ENCODE measurements at regions of chr1 and their contacts with region 1.

Region 1: DNA sequence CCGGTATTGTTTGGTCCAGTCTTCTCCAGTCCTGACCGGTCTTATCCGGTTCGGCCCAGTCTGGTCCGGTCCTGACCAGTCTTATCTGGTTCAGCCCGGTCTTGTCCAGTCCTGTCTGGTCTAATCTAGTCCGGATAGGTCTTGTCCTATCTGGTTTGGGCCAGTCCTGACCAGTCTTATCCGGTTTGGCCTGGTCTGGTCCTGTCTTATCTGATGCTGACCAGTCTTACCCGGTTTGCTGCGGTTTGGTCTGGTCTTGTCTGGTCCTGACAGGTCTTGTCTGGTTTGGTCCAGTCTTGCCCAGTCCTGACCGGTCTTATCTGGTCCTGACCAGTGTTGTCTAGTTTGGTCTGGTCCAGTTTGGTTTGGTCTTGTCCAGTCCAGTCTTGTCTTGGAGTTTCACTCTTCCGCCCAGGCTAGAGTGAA is 30.1 kb downstream of the DHX9 start:
- DNase-seq: no peak
- ATAC-seq: peak; percentile 57
- H3K4me3 ChIP-seq: no peak overlapping the region
- H3K27ac ChIP-seq: no peak overlapping the region
- H3K4me1 ChIP-seq: no peaks in the 10 kb centered on the region
- H3K27me3 ChIP-seq: no peaks in the 10 kb centered on the region
- CTCF ChIP-seq: no peak
- EP300 ChIP-seq: no peak
- POLR2A ChIP-seq: no peak
- RAD21 ChIP-seq: no peak

Region 2: GRCh38 chr1:182889997-182890396 is 20.7 kb after region 1 on chr1:
- CTCF ChIA-PET with region 1: no interaction called
- POLR2A ChIA-PET with region 1: no interaction called
- in situ Hi-C with region 1: no loop called
- intact Hi-C with region 1: no loop called
- DNase-seq: no peak
- ATAC-seq: peak; percentile 25
- H3K4me3 ChIP-seq: no peak overlapping the region
- H3K27ac ChIP-seq: no peak overlapping the region
- H3K4me1 ChIP-seq: no peaks in the 10 kb centered on the region
- H3K27me3 ChIP-seq: no peaks in the 10 kb centered on the region
- CTCF ChIP-seq: no peak
- EP300 ChIP-seq: no peak
- POLR2A ChIP-seq: no peak
- RAD21 ChIP-seq: no peak

Region 3: GRCh38 chr1:183139281-183139942 is 270.2 kb after region 1 on chr1:
- CTCF ChIA-PET with region 1: no interaction called
- POLR2A ChIA-PET with region 1: no interaction called
- in situ Hi-C with region 1: loop called (anchors 25 kb)
- intact Hi-C with region 1: no loop called
- DNase-seq: peak; percentile 74
- ATAC-seq: peak; percentile 81
- H3K4me3 ChIP-seq: no peak overlapping the region
- H3K27ac ChIP-seq: peak overlapping the region; percentile 35
- H3K4me1 ChIP-seq: peaks cover 23% of the 10 kb centered on the region
- H3K27me3 ChIP-seq: no peaks in the 10 kb centered on the region
- CTCF ChIP-seq: no peak
- EP300 ChIP-seq: peak in 1 of 2 experiments; percentile 67; a peak in 2 of 4 replicates
- POLR2A ChIP-seq: no peak
- RAD21 ChIP-seq: no peak

Measured in HepG2 (cell line).